ENCODE measurements at regions of chr1 and their contacts with region 1.

Region 1: GRCh38 chr1:21896652-21897532 is 40.2 kb downstream of the HSPG2 start:
- DNase-seq: peak; percentile 81
- H3K4me3 ChIP-seq: no peak overlapping the region
- H3K27ac ChIP-seq: peak overlapping the region; percentile 80
- H3K4me1 ChIP-seq: peaks cover 28% of the 10 kb centered on the region
- H3K27me3 ChIP-seq: no peaks in the 10 kb centered on the region
- CTCF ChIP-seq: no peak

Region 2: DNA sequence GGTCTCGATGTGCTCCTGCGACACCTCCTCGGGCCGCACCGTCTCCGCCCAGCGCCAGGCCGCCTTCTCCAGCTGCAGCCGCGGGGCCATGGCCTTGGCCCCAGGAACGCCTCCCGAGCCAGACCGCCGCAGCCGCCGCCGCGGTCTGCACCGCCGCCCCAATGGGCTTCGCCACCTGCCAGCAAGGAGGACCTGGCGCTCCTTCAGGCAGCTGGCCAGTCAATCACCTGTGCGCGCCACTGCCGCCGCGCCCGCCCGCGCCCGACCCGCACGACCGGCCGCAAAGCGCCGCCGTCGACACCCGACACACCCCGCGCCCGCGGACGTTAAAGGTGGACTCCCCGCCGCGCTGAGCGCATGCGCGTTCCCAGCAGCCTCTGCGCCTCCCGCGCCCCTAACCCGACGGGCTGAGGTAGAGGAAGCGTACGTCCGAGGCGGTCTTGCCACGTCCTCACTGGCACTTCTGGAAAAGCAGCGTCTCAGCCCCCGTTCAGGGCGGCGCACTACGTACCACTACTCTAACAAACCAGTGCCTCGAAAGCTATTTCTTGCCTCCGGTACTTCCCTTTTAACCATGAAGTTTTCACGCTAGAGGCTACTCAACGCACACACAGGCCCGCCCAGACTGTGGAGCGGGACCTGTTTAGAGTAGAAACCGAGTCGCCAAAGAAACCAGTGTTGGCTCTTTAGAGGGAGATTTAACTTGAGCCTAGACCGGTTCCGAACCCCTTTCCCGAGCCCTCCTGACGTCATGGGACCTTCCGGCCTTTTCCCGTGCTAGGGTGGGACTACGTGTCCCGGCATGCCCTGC is 113.8 kb before region 1 on chr1 and contains the start of gene USP48:
- intact Hi-C with region 1: no loop called
- DNase-seq: peak; percentile 98
- H3K4me3 ChIP-seq: peak within 1 kb of the TSS; percentile 95
- H3K27ac ChIP-seq: peak within 1 kb of the TSS; percentile 100
- H3K4me1 ChIP-seq: no peaks in the 10 kb centered on the region
- H3K27me3 ChIP-seq: no peaks in the 10 kb centered on the region
- CTCF ChIP-seq: no peak
- total RNA-seq, gene USP48: 47.1 to 51.3 TPM

Region 3: GRCh38 chr1:21939650-21940374 is 42.9 kb after region 1 on chr1:
- intact Hi-C with region 1: loop called (anchors 5 kb)
- DNase-seq: peak; percentile 82
- H3K4me3 ChIP-seq: no peak overlapping the region
- H3K27ac ChIP-seq: peak overlapping the region; percentile 54
- H3K4me1 ChIP-seq: peaks cover 11% of the 10 kb centered on the region
- H3K27me3 ChIP-seq: no peaks in the 10 kb centered on the region
- CTCF ChIP-seq: peak; percentile 44